Motor neuron (in vitro differentiated cells): ENCODE measurements at regions of chr19 and their contacts with region 1.

Region 1: DNA sequence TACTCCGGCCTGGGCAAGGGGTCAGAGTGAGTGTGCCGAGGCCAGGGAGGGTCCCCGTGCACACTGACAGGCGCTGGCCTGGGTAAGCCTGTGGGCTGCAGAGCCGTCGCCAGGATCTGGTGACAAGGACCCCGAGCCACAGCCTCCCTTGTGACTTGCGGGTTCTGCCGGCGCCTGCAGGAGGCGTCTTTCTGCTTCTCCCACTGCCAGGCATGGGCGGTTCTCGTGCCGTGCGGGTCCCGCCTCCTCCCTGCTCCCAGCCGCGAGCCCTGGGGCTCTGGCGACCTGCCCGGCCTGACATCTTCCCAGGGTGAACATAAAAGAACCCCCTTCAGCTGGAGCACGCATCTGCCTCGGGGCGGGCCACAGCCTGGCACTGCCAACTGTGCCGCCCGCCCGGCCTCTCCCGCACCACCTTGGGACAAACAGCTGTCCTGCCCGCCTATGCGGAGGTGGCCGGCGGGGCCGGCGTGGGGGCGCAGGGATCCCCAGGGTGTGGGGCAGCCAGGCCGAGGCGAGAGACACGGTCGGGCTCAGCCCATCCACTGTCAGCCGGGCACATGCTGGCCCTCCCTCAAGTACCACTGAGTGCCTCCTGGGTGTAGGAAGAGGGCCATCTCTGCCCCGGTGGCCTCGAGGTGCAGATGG is 1.5 kb upstream of the HCN2 start:
- ATAC-seq: peak; percentile 54 to 67 (median 58)
- H3K4me3 ChIP-seq: peak overlapping the region in 1 of 5 donors; percentile 2
- H3K27ac ChIP-seq: no peak overlapping the region
- H3K4me1 ChIP-seq: peaks cover 16 to 32% of the 10 kb centered on the region in 2 donors

Region 2: DNA sequence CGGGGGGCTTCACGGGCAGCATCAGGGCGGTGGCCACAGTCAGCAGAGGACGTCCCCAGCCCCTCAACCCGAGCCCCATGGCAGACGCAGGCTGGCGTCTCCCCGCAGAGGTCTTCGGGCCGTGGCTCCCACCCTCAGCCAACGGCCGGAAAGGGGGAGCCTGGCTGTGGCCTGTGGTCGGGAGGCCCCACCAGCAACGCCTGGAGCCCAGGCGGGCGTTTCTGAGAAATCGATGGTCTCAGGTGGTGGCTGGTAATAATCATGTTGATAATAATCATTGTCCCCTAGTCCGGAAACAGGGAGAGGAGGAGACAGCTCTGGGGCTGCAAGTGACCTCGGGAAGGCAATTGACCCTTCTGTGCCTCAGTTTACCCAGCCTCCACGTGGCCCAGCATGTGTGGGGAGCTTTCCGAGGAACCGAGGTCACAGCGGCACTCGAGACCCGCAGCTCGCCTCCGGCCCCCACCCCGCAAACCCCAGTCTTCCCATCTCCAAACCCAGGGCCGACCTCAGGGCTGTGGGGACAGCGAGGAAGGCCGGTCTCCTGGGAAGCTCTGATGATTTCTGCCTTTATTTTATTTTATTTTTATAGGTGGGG is 107.2 kb after region 1 on chr19 and contains the start of gene PRSS57:
- in situ Hi-C with region 1: no loop called
- ATAC-seq: peak in 4 of 8 experiments; percentile 21 to 24 (median 22)
- H3K4me3 ChIP-seq: no peak within 1 kb of the TSS
- H3K27ac ChIP-seq: no peak within 1 kb of the TSS
- H3K4me1 ChIP-seq: peaks cover 4 to 6% of the 10 kb centered on the region in 2 donors
- total RNA-seq, gene PRSS57: 0.11 to 0.90 (median 0.47) TPM in 4 of 8 experiments, not detected in the others

Region 3: GRCh38 chr19:737581-738093 is 149.4 kb after region 1 on chr19:
- in situ Hi-C with region 1: loop called in 2 of 9 experiments (anchors 25 kb)
- ATAC-seq: peak in 4 of 8 experiments; percentile 9 to 84 (median 25)
- H3K4me3 ChIP-seq: no peak overlapping the region
- H3K27ac ChIP-seq: no peak overlapping the region
- H3K4me1 ChIP-seq: no peaks in the 10 kb centered on the region